PC-9 (cell line): ENCODE measurements at regions of chr10 and their contacts with region 1.

Region 1: GRCh38 chr10:5904227-5904626 is 14.2 kb downstream of the FBH1 start:
- DNase-seq: no peak
- H3K4me3 ChIP-seq: no peak overlapping the region
- H3K27ac ChIP-seq: no peak overlapping the region
- H3K4me1 ChIP-seq: no peaks in the 10 kb centered on the region
- H3K27me3 ChIP-seq: no peaks in the 10 kb centered on the region
- CTCF ChIP-seq: no peak

Region 2: GRCh38 chr10:5434017-5434753 is 470.0 kb before region 1 on chr10:
- CTCF ChIA-PET with region 1: interaction called, 11 read pairs
- POLR2A ChIA-PET with region 1: no interaction called
- intact Hi-C with region 1: no loop called
- DNase-seq: peak in 1 of 2 experiments; percentile 14
- H3K4me3 ChIP-seq: no peak overlapping the region
- H3K27ac ChIP-seq: peak overlapping the region; percentile 43
- H3K4me1 ChIP-seq: peaks cover 10% of the 10 kb centered on the region; the same call in 1 of the 2 replicates
- H3K27me3 ChIP-seq: no peaks in the 10 kb centered on the region
- CTCF ChIP-seq: peak; percentile 76